MCF 10A (cell line): ENCODE measurements at regions of chr9 and their contacts with region 1.

Region 1: DNA sequence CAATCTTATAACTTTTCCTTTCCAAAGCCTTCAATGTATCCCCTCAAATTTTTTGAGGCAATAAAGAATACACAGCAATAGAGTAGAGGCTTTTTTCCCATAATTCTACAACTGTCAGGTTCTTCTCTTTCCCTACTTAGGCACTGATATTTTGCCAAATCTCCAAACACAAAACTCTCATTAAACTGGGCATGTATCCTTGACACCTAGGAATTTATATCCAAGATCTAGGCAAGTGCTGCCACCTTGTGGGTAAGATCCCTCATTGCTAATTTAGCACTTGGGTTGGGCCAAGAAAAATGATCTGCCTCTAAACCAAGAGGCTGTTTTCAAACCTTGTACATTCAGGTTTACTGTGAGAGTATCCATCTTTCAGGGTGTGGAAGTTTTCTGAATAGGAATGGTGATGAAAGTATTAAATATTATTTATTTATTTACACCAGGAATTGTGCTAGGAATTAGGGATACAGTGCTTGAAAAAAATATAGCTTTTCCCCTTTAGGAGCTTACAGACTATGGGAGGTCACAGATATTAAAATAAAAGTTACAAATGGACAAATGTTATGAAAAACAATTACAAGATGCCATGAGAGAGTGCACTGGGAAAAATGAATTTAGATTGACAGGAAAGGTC is 17.6 kb downstream of the TSTD2 start:
- DNase-seq: peak; percentile 71
- H3K4me3 Mint-ChIP-seq: no peak overlapping the region
- H3K27ac Mint-ChIP-seq: no peak overlapping the region
- H3K4me1 Mint-ChIP-seq: peaks cover 7% of the 10 kb centered on the region
- H3K27me3 Mint-ChIP-seq: no peaks in the 10 kb centered on the region
- CTCF ChIP-seq: peak; percentile 54

Region 2: GRCh38 chr9:97386733-97387503 is 228.6 kb before region 1 on chr9:
- CTCF ChIA-PET with region 1: interaction called, 7 read pairs
- POLR2A ChIA-PET with region 1: no interaction called
- intact Hi-C with region 1: loop called (anchors 2 kb)
- DNase-seq: peak; percentile 73
- H3K4me3 Mint-ChIP-seq: no peak overlapping the region
- H3K27ac Mint-ChIP-seq: no peak overlapping the region
- H3K4me1 Mint-ChIP-seq: no peaks in the 10 kb centered on the region
- H3K27me3 Mint-ChIP-seq: no peaks in the 10 kb centered on the region
- CTCF ChIP-seq: peak; percentile 98

Region 3: DNA sequence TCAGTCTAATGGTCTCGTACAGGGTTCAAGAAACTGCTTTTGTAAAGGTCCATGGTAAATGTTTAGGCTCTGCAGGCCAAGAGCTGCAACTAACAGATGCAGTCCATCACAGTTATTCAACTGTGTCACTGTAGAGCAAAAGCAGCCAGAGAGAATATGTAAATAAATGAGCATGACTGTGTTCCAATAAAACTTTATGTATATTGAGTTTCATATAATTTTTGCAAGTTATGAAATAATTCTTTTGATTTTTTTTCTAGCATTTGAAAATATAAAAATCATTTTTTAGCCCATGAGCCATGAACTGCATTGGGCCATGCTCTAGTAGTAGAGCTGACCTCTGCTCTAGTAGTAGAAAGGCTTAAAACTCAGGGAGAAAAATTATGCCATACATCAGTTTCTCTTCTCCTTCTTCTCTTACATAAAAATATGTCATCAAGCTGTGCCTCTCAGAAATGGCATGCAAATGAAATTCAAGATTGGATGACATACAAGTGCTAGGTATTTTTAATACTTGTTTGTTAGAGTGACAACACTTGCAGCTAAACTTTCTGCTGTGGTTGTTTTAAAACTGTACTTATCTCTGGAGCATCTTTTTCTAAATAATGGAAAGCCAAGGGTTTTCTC is 156.3 kb before region 1 on chr9:
- CTCF ChIA-PET with region 1: interaction called, 25 read pairs
- POLR2A ChIA-PET with region 1: interaction called, 3 read pairs
- intact Hi-C with region 1: no loop called
- DNase-seq: no peak
- H3K4me3 Mint-ChIP-seq: no peak overlapping the region
- H3K27ac Mint-ChIP-seq: no peak overlapping the region
- H3K4me1 Mint-ChIP-seq: no peaks in the 10 kb centered on the region
- H3K27me3 Mint-ChIP-seq: no peaks in the 10 kb centered on the region
- CTCF ChIP-seq: no peak

Region 4: DNA sequence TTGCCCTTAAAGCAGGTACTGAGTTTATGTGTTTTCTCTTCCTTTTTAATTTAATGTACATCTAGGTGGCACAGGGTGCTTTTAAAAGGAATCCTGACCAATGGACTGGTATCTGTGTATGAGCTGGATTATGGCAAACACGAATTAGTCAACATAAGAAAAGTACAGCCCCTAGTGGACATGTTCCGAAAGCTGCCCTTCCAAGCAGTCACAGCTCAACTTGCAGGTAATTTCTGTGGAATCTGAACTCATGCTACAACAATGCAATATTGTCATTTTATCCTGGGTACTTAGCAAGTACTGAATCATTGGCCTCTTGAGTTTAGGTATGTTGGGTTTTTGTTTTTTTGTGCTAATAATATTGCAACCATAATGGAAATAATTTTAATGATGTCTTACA is 128.4 kb before region 1 on chr9:
- CTCF ChIA-PET with region 1: interaction called, 22 read pairs
- POLR2A ChIA-PET with region 1: interaction called, 3 read pairs
- intact Hi-C with region 1: no loop called
- DNase-seq: peak; percentile 25
- H3K4me3 Mint-ChIP-seq: no peak overlapping the region
- H3K27ac Mint-ChIP-seq: no peak overlapping the region
- H3K4me1 Mint-ChIP-seq: no peaks in the 10 kb centered on the region
- H3K27me3 Mint-ChIP-seq: no peaks in the 10 kb centered on the region
- CTCF ChIP-seq: peak; percentile 16

Region 5: GRCh38 chr9:97632985-97633858 is 17.7 kb after region 1 on chr9 and contains the starts of genes NCBP1 and TSTD2:
- CTCF ChIA-PET with region 1: interaction called, 27 read pairs
- POLR2A ChIA-PET with region 1: interaction called, 9 read pairs
- intact Hi-C with region 1: no loop called
- DNase-seq: peak; percentile 98
- H3K4me3 Mint-ChIP-seq: peak within 1 kb of the TSS; percentile 83
- H3K27ac Mint-ChIP-seq: peak within 1 kb of the TSS; percentile 99
- H3K4me1 Mint-ChIP-seq: peaks cover 34% of the 10 kb centered on the region
- H3K27me3 Mint-ChIP-seq: no peaks in the 10 kb centered on the region
- CTCF ChIP-seq: no peak
- total RNA-seq, gene NCBP1: 35.6 and 38.7 TPM in 2 replicates
- total RNA-seq, gene TSTD2: 18.0 and 19.0 TPM in 2 replicates

Region 6: GRCh38 chr9:97848235-97848581 is 232.7 kb after region 1 on chr9:
- CTCF ChIA-PET with region 1: no interaction called
- POLR2A ChIA-PET with region 1: no interaction called
- intact Hi-C with region 1: no loop called
- DNase-seq: no peak
- H3K4me3 Mint-ChIP-seq: no peak overlapping the region
- H3K27ac Mint-ChIP-seq: no peak overlapping the region
- H3K4me1 Mint-ChIP-seq: peaks cover 7% of the 10 kb centered on the region
- H3K27me3 Mint-ChIP-seq: peaks cover 51% of the 10 kb centered on the region
- CTCF ChIP-seq: no peak